ENCODE measurements at regions of chr14 and their contacts with region 1.

Region 1: DNA sequence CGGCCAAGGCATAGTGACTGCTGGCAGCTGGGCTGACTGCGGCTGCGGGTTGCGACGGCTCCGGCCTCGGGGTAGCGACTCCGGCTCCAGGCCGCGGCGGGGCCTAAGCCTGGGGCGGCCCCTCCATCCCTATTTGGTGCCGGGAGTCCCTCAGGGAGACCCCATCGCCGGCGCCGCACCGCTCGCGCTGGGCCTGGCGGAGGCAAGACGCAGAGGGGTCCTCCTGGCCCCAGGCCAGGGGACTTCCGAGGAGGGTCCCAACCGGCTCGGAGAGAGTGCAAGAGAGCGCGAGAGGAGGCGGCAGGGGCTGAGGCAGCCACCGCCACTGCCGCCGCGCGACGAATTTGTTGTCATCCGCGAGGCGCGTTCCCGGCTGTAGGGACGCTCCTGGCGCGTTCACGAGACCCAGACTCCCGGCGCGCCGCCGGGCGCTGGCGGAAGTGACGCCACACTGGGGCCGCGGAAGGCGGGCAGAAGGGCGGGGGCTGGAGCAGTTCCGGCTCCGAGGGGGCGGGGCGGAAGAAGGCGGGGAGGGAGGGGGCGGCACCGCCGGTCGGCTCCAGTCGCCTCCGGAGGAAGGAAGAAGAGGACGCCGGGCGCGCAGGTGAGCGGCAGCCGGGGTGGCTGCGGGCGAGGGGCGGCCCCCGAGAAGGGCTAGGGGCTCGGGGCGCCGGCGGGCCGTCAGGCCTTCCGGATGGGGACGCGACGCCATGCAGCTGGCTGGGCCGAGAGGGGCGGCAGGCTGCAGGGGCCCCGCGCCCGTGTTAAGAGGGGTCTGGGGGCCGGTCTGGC is at the starts of genes ATG2B and GSKIP:
- DNase-seq: peak; percentile 94 to 97 (median 96)
- ATAC-seq: peak; percentile 97 to 99 (median 99)
- H3K4me3 ChIP-seq: peak within 1 kb of the TSS; percentile 72 to 99 (median 91)
- H3K27ac ChIP-seq: peak within 1 kb of the TSS; percentile 62 to 97 (median 91)
- H3K4me1 ChIP-seq: peaks cover 2 to 46% (median 26%) of the 10 kb centered on the region in 12 donors
- H3K27me3 ChIP-seq: no peaks in the 10 kb centered on the region
- CTCF ChIP-seq: no peak
- POLR2A ChIP-seq: peak in 1 of 2 donors; percentile 54
- total RNA-seq, gene ATG2B: 9.1 to 19.5 (median 15.7) TPM
- total RNA-seq, gene GSKIP: 7.6 to 19.9 (median 13.1) TPM

Region 2: DNA sequence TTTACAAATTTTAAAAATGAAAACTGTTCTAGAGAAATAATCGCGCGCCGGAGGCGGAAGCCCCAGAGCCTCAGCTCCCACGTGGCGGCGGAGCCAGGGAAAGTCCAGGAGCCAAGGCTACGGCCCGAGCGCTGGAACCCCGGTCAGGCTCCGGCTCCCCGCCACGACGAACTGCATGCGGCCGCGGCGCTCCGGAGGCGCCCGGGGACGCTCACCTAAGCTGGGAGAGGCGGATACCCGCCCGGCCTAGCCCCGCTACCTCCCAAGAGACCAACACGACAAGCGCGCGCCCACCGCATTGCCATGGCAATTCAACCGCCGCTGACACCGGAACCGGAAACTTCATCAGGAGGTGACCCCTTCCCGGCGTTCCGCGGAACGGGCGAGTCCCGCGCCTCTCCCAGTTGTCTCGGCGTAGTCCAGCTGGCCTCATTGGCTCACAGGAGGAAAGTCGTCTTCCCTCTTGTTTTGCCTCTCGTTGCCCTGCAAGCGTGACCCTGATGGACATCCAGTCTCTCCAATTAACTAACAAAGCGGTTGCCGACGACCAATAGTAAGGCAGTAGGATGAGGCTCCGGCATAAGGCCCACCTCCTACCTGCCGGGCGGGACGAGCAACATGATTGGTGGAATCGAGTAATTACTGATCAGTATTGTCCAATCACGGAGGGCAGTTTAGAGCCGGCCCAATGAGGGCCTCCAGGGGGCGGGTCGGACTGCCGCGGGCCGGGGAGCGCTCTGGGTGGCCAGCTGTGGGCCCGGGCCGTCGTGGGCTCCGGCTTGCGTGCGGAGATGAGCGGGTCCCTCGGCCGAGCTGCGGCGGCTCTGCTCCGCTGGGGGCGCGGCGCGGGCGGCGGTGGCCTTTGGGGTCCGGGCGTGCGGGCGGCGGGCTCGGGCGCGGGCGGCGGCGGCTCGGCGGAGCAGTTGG is 828.6 kb before region 1 on chr14 and contains the start of gene GLRX5:
- intact Hi-C with region 1: loop called in 2 of 10 experiments (anchors 10 kb)
- DNase-seq: peak; percentile 98 to 99 (median 99)
- ATAC-seq: peak; percentile 95 to 98 (median 97)
- H3K4me3 ChIP-seq: peak within 1 kb of the TSS; percentile 69 to 99 (median 90)
- H3K27ac ChIP-seq: peak within 1 kb of the TSS; percentile 72 to 89 (median 84)
- H3K4me1 ChIP-seq: peaks cover 8 to 79% (median 67%) of the 10 kb centered on the region in 12 donors
- H3K27me3 ChIP-seq: no peaks in the 10 kb centered on the region
- CTCF ChIP-seq: peak in 8 of 12 donors; percentile 7 to 44 (median 13)
- POLR2A ChIP-seq: peak; percentile 64 to 65
- total RNA-seq, gene GLRX5: 60.8 to 113 (median 78.5) TPM

Region 3: DNA sequence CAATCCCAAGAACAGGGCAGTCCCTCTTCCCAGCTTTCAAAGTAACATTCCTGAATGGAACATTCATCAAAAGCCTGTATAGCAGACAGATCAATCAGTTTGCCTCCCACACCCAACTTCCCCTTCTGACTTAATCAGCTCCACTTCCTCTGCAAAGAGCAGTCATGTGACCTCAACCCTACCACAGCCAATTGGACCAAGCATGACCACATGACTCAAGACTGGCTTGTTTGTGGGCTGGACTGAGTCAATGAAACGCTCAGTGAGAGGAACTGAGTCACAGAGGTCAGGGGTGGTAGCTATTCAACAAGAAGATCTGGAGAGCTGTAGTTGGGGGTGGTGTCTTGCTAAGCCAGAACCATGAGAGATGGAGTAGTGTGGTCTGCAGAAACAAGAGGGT is 527.8 kb before region 1 on chr14:
- intact Hi-C with region 1: no loop called
- DNase-seq: no peak
- ATAC-seq: no peak
- H3K4me3 ChIP-seq: no peak overlapping the region
- H3K27ac ChIP-seq: no peak overlapping the region
- H3K4me1 ChIP-seq: no peaks in the 10 kb centered on the region
- H3K27me3 ChIP-seq: peaks cover 0 to 21% (median 0%) of the 10 kb centered on the region in 9 donors
- CTCF ChIP-seq: no peak
- POLR2A ChIP-seq: no peak

Region 4: DNA sequence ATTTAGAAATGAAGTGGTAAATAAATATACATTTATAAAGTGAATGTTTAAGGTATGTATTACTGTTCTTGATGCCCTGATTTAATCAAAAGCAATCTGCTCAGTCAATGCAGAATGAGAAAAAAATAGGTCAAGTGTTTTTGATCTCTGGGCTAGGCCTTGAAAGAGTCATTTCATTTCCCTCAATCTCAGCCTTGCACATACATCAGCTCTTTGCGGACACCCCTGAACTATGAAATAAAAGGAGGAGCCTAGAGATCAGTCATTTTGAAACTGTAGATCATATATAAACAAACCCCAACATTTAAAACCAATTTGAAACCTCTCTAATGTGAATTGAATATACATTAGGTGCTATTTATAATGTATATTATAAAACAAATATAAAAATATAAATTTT is 42.6 kb before region 1 on chr14:
- intact Hi-C with region 1: no loop called
- DNase-seq: no peak
- ATAC-seq: no peak
- H3K4me3 ChIP-seq: no peak overlapping the region
- H3K27ac ChIP-seq: no peak overlapping the region
- H3K4me1 ChIP-seq: no peaks in the 10 kb centered on the region
- H3K27me3 ChIP-seq: no peaks in the 10 kb centered on the region
- CTCF ChIP-seq: no peak
- POLR2A ChIP-seq: no peak

Region 5: DNA sequence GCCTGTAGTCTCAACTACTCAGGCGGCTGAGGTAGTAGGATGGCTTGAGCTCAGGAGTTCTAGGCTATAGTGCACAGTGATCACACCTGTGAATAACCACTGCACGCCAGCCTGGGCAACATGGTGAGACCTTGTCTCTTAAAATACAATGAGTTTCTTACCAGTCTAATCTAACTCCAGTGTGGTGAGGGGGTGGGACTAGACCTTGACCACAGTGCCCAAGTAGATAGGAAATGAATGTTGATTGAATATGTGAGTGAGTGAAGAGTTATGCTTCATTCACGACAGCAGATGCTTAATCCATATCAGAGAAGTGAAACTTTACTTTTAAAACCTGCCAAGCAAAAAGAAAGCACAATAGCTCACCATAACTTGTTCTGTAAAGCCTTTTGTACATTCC is 17.6 kb after region 1 on chr14:
- intact Hi-C with region 1: no loop called
- DNase-seq: no peak
- ATAC-seq: no peak
- H3K4me3 ChIP-seq: no peak overlapping the region
- H3K27ac ChIP-seq: no peak overlapping the region
- H3K4me1 ChIP-seq: no peaks in the 10 kb centered on the region
- H3K27me3 ChIP-seq: no peaks in the 10 kb centered on the region
- CTCF ChIP-seq: no peak
- POLR2A ChIP-seq: no peak

Region 6: GRCh38 chr14:96391293-96392118 is 28.3 kb after region 1 on chr14:
- intact Hi-C with region 1: loop called in 4 of 10 experiments (anchors 1 to 5 kb)
- DNase-seq: peak; percentile 95 to 100 (median 97)
- ATAC-seq: peak; percentile 96 to 99 (median 98)
- H3K4me3 ChIP-seq: peak overlapping the region; percentile 53 to 88 (median 80)
- H3K27ac ChIP-seq: peak overlapping the region in 11 of 12 donors; percentile 3 to 81 (median 66)
- H3K4me1 ChIP-seq: peaks cover 0 to 16% (median 9%) of the 10 kb centered on the region in 12 donors
- H3K27me3 ChIP-seq: peaks cover 0 to 13% (median 0%) of the 10 kb centered on the region in 9 donors
- CTCF ChIP-seq: no peak
- POLR2A ChIP-seq: no peak

Region 7: DNA sequence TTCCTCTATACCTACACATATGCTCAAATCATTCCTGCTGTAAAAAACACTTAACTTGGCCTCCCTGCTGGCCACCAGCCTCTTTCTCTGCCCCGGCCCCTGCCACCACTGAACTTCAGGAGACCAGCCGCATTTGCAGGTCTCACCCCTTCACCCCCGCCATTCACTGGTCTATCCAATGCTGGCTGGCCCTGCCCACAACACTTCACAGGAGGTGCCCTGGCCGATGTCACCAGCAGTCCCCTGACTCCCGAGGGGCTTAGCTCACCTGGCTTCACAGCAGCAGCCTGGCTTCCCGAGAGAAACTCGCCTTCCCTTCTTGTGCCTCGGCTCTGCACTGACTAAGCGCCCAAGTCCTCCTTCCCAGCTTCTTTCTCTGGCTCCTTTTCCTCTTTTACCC is 36.2 kb after region 1 on chr14:
- intact Hi-C with region 1: loop called in 1 of 10 experiments (anchors 5 kb)
- DNase-seq: no peak
- ATAC-seq: no peak
- H3K4me3 ChIP-seq: no peak overlapping the region
- H3K27ac ChIP-seq: no peak overlapping the region
- H3K4me1 ChIP-seq: peaks cover 0 to 4% (median 0%) of the 10 kb centered on the region in 12 donors
- H3K27me3 ChIP-seq: no peaks in the 10 kb centered on the region
- CTCF ChIP-seq: no peak
- POLR2A ChIP-seq: no peak

Region 8: DNA sequence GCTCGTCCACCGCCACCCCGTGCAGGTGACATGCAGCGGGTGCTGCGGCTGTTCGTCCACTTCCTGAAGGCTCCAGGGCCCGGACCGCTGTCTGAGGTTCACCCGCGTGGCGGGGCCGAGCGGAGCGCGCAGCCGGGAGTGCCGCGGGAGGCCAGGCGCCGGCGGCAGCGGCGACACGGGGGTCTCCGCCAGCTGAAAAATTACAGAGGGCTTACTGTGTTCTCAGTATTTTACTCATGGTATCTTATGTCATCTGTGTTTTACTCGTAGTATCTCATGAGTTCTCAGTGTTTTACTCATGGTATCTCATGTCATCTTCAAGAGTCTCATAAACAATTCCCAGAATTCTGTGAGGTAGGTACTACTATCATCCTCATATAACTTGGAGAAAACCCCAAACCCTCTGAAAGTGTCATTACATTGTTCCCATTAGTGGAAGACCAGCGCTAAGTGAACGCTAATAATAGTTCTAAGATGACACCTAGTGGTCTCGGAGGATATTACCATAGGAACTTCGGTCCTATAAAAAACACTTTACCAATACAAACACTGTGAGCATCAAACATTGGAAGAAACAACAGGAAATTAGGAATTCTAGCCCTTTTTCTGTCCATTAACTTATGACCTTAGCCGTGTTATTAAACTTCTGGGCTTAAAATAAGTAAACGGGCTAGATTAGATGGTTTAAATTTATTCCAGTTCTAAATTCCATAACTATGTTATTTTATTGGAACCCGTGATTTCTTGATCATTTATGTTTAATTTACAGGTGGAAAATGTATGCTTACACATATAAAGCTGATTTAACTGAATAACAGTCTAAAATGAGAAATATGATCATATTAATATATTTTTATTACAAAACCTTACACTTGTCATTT is 61.2 kb after region 1 on chr14:
- intact Hi-C with region 1: loop called in 3 of 10 experiments (anchors 5 to 10 kb)
- DNase-seq: peak in 3 of 5 donors; percentile 13 to 68 (median 35)
- ATAC-seq: peak; percentile 51 to 93 (median 79)
- H3K4me3 ChIP-seq: peak overlapping the region; percentile 6 to 56 (median 44)
- H3K27ac ChIP-seq: no peak overlapping the region
- H3K4me1 ChIP-seq: peaks cover 0 to 14% (median 2%) of the 10 kb centered on the region in 12 donors
- H3K27me3 ChIP-seq: no peaks in the 10 kb centered on the region
- CTCF ChIP-seq: peak; percentile 68 to 85 (median 79)
- POLR2A ChIP-seq: no peak

Region 9: DNA sequence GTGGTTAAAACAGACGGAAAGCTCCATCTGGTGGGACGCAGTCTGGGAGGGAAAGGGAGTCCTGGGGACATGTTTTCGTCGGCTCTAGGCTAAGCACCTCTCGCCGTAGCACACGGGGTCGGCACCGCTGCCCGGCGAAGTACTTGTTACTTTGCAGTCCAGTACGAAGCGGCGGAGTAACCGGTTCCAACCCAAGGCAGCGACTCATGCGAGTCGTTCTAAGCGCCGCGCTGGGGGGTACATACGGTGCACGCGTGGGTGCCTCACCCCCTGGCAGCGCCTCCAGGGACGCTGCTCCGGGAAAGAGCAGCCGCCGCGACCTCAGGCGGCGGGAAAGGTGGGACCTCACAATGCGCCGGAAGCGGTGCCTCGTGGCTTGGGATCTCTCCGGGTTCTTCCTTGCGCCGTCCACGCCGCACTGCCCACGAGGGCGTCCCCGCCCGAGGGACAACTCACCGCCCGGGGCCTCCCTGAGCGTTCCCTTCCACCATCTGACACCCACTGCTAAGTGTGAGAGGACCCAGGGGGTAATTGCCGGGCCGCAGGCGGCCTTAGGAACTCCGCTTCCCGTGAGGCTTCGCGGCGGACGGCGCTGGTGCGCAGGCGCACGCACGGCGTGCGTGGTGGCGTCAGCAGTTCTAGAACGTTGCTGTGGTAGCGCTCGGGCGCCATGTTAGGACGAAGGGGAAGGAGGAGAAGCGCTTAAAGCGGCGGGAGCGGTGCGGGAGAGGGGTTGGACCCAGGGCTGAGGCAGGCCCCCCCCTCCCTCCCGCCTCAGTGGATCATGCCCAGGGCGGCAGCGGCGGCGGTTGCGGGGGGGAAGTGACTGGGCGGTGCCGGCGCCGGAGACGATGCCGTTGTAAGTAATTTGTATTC is 138.8 kb after region 1 on chr14 and contains the start of gene PAPOLA:
- intact Hi-C with region 1: loop called in 2 of 10 experiments (anchors 5 to 10 kb)
- DNase-seq: peak; percentile 93 to 97 (median 96)
- ATAC-seq: peak; percentile 97 to 98 (median 98)
- H3K4me3 ChIP-seq: peak within 1 kb of the TSS; percentile 75 to 98 (median 94)
- H3K27ac ChIP-seq: peak within 1 kb of the TSS; percentile 94 to 100 (median 98)
- H3K4me1 ChIP-seq: peaks cover 12 to 47% (median 33%) of the 10 kb centered on the region in 12 donors
- H3K27me3 ChIP-seq: peaks cover 0 to 3% (median 0%) of the 10 kb centered on the region in 9 donors
- CTCF ChIP-seq: peak in 7 of 12 donors; percentile 9 to 35 (median 19)
- POLR2A ChIP-seq: peak in 1 of 2 donors; percentile 72
- total RNA-seq, gene PAPOLA: 88.4 to 147 (median 120) TPM

Region 10: GRCh38 chr14:96509457-96510090 is 146.4 kb after region 1 on chr14:
- intact Hi-C with region 1: loop called in 2 of 10 experiments (anchors 5 to 10 kb)
- DNase-seq: no peak
- ATAC-seq: no peak
- H3K4me3 ChIP-seq: no peak overlapping the region
- H3K27ac ChIP-seq: peak overlapping the region in 1 of 12 donors; percentile 9
- H3K4me1 ChIP-seq: peaks cover 4 to 94% (median 51%) of the 10 kb centered on the region in 12 donors
- H3K27me3 ChIP-seq: no peaks in the 10 kb centered on the region
- CTCF ChIP-seq: no peak
- POLR2A ChIP-seq: no peak